ENCODE measurements at regions of chr7 and their contacts with region 1.

Region 1: GRCh38 chr7:88357781-88358525 is 51.3 kb upstream of the STEAP4 start:
- DNase-seq: peak in 1 of 2 donors; percentile 25
- H3K4me3 ChIP-seq: no peak overlapping the region
- H3K27ac ChIP-seq: no peak overlapping the region
- H3K4me1 ChIP-seq: peaks cover 0 to 11% (median 3%) of the 10 kb centered on the region in 4 donors
- H3K27me3 ChIP-seq: no peaks in the 10 kb centered on the region
- CTCF ChIP-seq: peak in 1 of 7 experiments; percentile 28
- EP300 ChIP-seq: no peak
- POLR2A ChIP-seq: no peak

Region 2: DNA sequence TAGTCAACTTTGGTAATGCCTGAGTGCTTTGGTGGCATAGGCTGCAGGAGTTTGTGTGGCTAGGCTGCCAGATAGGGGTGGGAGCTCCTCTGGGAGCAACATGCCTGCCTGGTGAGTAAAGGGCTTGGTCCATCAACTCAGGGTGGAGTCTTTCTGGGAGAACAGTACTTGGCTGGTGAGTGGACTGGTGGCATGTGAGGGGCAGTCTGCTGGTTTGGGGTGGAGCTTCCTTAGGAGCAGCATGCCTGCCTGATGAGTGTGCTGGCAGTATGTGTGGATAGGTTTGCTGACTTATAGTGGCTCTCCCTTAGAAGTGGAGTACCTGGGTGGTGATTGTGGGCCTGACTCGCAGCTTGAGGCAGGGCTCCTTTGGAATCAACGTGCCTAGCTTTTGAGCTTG is 103.2 kb before region 1 on chr7:
- intact Hi-C with region 1: loop called (anchors 10 kb)
- DNase-seq: no peak
- H3K4me3 ChIP-seq: no peak overlapping the region
- H3K27ac ChIP-seq: no peak overlapping the region
- H3K4me1 ChIP-seq: no peaks in the 10 kb centered on the region
- H3K27me3 ChIP-seq: no peaks in the 10 kb centered on the region
- CTCF ChIP-seq: no peak
- EP300 ChIP-seq: no peak
- POLR2A ChIP-seq: no peak